Right cardiac atrium (tissue), 5 donors: ENCODE measurements at regions of chr7 and their contacts with region 1.

Region 1: GRCh38 chr7:75994388-75995051 is at the start of gene TMEM120A:
- DNase-seq: peak; percentile 98 to 100 (median 99)
- ATAC-seq: peak; percentile 93 to 95
- H3K4me3 ChIP-seq: peak within 1 kb of the TSS; percentile 69
- H3K27ac ChIP-seq: peak within 1 kb of the TSS; percentile 93
- H3K4me1 ChIP-seq: peaks cover 14% of the 10 kb centered on the region
- H3K27me3 ChIP-seq: no peaks in the 10 kb centered on the region
- total RNA-seq, gene TMEM120A: 67.7 to 111 (median 82.3) TPM

Region 2: DNA sequence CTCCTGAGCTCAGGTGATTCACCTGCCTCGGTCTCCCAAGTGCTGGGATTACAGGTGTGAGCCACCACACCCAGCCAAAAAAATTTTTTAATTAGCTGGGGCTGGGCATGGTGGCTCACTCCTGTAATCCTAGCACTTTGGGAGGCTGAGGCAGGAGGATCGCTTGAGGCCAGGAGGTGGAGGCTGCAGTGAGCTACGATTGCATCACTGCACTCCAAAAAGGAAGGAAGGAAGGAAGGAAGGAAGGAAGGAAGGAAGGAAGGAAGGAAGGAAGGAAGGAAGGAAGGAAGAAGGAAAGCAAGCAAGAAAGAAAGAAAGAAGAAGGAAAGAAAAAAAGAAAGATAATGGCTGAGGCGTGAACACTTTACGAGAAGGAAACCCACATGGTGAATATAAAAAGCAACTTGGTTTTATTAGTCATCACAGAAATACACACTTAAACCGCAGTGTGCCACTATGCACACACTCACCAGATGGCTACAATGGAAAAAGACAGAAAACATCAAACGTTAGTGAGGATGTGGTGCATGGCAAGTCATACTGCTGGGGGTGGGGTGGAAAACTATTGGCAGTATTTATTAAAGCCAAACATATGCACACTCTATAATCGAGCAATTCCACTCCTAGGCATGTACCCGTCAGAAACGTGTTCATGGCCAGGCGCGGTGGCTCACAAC is 218.1 kb before region 1 on chr7:
- intact Hi-C with region 1: no loop called
- DNase-seq: no peak
- ATAC-seq: no peak
- H3K4me3 ChIP-seq: no peak overlapping the region
- H3K27ac ChIP-seq: no peak overlapping the region
- H3K4me1 ChIP-seq: no peaks in the 10 kb centered on the region
- H3K27me3 ChIP-seq: no peaks in the 10 kb centered on the region

Region 3: DNA sequence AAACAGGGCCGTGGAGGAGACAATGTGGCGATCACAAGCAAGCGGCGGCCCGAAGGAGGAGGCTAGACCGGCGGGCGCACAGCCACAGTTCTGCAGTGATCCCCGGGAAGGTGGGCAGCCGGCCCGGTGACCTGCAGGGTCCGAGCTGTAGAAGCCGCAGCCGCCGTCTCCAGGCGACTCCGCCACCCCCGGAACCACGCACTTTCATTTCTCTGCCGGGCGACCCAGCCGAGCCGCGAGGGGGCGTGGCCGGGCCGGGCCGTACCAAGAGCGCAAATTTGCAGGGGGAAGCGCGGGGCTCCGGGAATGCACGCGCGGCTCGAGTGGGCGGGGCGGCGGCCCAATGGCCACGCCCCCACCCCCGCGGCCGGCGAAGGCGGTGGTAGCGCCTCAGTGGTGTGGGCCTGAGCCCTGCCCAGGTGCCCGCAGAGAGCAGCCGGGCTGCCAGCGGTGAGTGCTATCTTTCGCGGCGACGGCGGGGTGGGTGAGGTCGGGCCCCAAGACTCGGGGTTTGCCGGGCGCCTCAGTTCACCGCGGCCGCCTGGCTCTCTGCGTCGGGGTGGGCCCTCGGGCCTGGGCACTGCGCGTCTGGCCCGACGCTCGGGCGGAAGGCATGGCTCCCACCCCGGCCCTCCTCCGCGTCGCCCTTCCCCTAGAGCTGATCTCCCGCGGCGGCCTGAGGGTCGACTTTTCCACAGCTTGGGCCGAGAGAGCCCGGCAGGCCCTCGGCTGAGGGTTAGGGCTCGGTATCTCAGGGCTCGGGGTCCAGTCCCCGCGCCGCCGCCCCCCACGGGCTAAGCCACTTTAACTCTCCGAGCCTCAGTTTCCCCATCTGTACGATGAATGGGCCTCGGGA is 79.6 kb before region 1 on chr7 and contains the start of gene POR:
- intact Hi-C with region 1: loop called in 1 of 4 experiments (anchors 5 kb)
- DNase-seq: peak; percentile 93 to 99 (median 97)
- ATAC-seq: peak; percentile 99 to 100
- H3K4me3 ChIP-seq: peak within 1 kb of the TSS; percentile 79
- H3K27ac ChIP-seq: peak within 1 kb of the TSS; percentile 90
- H3K4me1 ChIP-seq: peaks cover 2% of the 10 kb centered on the region
- H3K27me3 ChIP-seq: no peaks in the 10 kb centered on the region
- total RNA-seq, gene POR: 59.8 to 122 (median 62.7) TPM

Region 4: DNA sequence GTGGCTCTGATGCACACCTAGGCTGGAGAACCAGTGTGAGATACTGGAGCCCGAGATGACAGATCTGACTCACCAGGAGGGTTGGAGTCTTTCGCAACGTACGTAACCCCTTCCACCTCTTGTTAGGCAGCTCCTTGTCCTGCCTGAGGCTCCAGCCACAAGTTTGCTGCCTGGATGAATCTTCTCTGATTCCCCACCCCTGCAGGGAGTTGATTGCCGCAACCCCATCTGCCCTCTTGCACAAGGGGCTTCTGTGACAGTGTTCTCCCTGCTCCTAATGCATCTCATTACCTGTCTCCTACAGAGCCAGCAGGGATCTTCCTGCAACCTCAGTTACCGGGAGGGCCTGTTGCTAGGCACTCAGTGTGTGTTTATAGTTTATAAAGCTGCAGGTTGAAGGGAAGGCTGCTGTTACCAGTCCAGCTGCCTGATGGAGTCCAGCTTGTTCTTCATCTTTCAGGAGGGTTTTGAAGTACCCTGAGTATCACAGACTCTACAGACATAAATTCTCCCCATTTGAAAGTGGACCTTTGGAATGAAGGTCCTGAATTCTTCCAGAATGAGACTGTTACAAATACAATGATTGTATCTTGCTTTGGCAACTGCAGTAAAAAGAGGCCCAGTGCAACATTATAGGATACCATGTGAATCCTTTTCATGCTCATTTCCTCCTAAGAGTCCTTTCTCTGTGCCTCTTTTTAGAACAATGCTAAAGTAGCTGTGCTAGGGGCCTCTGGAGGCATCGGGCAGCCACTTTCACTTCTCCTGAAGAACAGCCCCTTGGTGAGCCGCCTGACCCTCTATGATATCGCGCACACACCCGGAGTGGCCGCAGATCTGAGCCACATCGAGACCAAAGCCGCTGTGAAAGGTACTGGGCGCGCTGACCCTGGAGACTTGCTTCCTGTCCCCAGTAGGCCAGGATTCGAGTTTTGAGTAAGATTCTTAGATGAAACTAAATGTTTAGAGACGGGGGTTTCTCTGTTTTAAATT is 59.9 kb after region 1 on chr7:
- intact Hi-C with region 1: loop called in 1 of 4 experiments (anchors 10 kb)
- DNase-seq: no peak
- ATAC-seq: peak in 1 of 2 donors; percentile 16
- H3K4me3 ChIP-seq: no peak overlapping the region
- H3K27ac ChIP-seq: no peak overlapping the region
- H3K4me1 ChIP-seq: peaks cover 2% of the 10 kb centered on the region
- H3K27me3 ChIP-seq: no peaks in the 10 kb centered on the region